ENCODE measurements at regions of chr9 and their contacts with region 1.

Region 1: DNA sequence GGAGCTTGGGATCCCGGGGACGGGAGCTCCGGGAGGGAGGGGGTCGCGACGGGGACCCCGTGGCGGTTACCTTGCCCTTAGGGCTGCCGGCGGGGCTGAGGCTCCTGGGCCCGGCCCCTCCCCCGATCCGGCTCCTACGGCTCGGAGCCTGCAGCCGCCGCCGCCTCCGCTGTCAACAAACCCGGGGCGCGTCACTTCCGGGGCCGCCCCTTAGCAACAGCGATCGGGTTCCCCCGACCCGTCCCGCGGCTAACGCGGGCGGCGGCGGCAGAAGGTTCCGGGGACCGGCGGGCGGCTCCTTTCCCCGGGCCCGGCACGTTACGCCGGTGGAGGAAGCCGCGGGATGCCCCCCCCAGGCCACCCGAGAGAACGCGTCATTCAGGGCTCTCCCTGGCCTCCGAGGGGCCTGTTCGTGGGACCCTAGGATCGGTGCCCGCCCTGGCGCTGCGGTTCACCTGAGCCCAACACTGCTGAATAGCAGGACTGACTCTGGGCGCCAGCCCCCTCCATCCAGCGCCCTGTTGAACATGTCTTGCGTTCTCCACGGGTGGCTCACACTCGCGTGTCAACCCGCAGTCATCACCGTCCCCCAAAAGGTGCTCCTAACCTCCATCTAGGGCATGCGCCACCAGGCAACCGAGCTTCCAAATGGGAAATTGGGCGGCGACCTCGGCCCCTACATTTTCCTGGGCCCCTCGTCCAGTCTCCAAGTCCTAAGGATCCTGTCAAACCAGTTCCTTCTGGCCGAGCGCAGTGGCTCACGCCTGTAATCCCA is at the start of gene ZER1:
- DNase-seq: peak; percentile 92 to 93
- H3K4me3 ChIP-seq: peak within 1 kb of the TSS; percentile 84 to 93
- H3K27ac ChIP-seq: peak within 1 kb of the TSS; percentile 93 to 96
- H3K4me1 ChIP-seq: peaks cover 0 to 30% (median 19%) of the 10 kb centered on the region in 4 donors
- H3K27me3 ChIP-seq: no peaks in the 10 kb centered on the region
- CTCF ChIP-seq: no peak

Region 2: DNA sequence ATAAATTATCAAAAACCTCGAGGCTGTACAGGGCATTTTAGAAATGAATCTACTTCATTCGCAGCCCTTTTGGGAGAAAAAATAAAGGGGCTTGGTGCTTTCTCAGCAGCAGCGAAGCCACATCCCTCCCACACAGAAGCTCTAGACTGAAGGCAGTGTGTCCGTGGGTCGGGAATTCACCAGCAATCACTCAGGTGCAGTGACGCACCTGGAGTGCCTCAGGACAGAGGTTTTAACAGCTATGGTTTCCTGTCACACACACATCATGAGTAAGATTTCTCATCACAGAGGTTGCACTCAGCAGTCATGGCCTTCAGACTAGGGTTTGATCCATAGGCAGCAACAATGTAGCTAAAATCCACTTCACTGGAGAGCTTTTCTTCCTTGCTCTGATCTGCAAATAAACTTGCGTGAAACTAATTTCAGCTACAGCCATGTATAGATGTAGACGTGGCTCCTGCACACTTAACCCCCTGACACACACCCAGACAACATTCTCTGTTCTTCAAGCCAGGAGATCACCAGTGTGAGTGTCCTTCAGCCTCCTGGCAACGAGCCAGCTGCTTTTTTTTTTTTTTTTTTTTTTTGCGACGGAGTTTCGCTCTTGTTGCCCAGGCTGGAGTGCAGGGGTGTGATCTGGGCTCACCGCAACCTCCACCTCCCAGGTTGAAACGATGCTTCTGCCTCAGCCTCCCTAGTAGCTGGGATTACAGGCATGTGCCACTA is 150.0 kb before region 1 on chr9:
- intact Hi-C with region 1: no loop called
- DNase-seq: no peak
- H3K4me3 ChIP-seq: no peak overlapping the region
- H3K27ac ChIP-seq: no peak overlapping the region
- H3K4me1 ChIP-seq: no peaks in the 10 kb centered on the region
- H3K27me3 ChIP-seq: no peaks in the 10 kb centered on the region
- CTCF ChIP-seq: no peak

Region 3: GRCh38 chr9:128786681-128787601 is 15.0 kb after region 1 on chr9 and contains the start of gene TBC1D13:
- intact Hi-C with region 1: loop called (anchors 2 kb)
- DNase-seq: peak; percentile 85 to 95
- H3K4me3 ChIP-seq: peak within 1 kb of the TSS; percentile 68 to 70
- H3K27ac ChIP-seq: peak within 1 kb of the TSS; percentile 76 to 80
- H3K4me1 ChIP-seq: peaks cover 6 to 18% (median 12%) of the 10 kb centered on the region in 4 donors
- H3K27me3 ChIP-seq: no peaks in the 10 kb centered on the region
- CTCF ChIP-seq: no peak

Measured in tibial artery (tissue), 4 donors.